ENCODE measurements at regions of chr11 and their contacts with region 1.

Region 1: GRCh38 chr11:1694064-1694845 is 2.7 kb upstream of the KRTAP5-6 start:
- DNase-seq: peak; percentile 55 to 87 (median 72)
- ATAC-seq: peak; percentile 91
- H3K4me3 ChIP-seq: peak overlapping the region; percentile 54
- H3K4me3 Mint-ChIP-seq: peak overlapping the region in 4 of 10 donors; percentile 6 to 82 (median 13)
- H3K27ac ChIP-seq: no peak overlapping the region
- H3K27ac Mint-ChIP-seq: peak overlapping the region in 2 of 9 donors; percentile 60
- H3K4me1 ChIP-seq: peaks cover 6 to 10% of the 10 kb centered on the region in 2 donors
- H3K4me1 Mint-ChIP-seq: peaks cover 0 to 13% (median 8%) of the 10 kb centered on the region in 7 donors
- H3K27me3 ChIP-seq: no peaks in the 10 kb centered on the region
- H3K27me3 Mint-ChIP-seq: peaks cover 8 to 29% (median 13%) of the 10 kb centered on the region in 5 donors

Region 2: DNA sequence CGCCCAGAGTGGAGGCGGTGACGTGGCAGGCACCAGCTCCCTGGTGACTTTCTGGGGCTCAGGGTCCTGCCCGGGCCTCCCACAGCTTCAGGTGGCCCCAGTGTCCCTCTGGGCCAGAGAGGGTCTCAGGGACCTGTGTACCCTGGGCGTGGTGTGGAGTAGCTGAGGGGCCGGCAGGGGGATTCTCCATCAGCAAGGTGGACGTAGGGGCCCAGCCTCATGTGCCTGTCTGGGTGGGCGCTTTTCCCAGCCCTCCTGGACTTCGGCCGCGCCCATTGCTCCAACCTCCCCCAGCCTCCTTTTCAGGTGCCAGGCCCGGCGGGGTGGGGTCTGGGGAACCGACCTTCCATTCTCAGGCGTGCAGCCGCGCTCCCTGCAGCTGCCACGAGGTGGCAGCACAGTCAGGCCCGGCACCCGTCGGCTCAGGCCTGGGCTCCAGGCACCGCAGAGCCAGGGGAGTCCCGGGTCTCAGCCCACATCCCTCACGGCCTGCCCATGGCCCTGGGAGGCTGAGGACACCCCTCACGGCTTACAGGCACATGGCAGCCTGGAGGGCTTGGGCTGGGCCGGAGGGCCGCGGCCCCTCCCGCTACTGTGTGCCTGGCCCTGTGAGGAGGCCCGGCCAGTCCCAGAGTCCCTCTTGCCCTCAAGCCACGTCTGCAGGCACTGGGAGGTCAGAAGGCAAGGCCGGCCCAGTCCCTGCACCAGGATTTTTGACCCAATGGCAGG is 491.3 kb before region 1 on chr11:
- CTCF ChIA-PET with region 1: no interaction called
- POLR2A ChIA-PET with region 1: no interaction called
- intact Hi-C with region 1: no loop called
- DNase-seq: peak in 8 of 9 donors; percentile 34 to 73 (median 60)
- ATAC-seq: peak; percentile 83
- H3K4me3 ChIP-seq: no peak overlapping the region
- H3K4me3 Mint-ChIP-seq: no peak overlapping the region
- H3K27ac ChIP-seq: no peak overlapping the region
- H3K27ac Mint-ChIP-seq: no peak overlapping the region
- H3K4me1 ChIP-seq: no peaks in the 10 kb centered on the region
- H3K4me1 Mint-ChIP-seq: no peaks in the 10 kb centered on the region
- H3K27me3 ChIP-seq: no peaks in the 10 kb centered on the region
- H3K27me3 Mint-ChIP-seq: no peaks in the 10 kb centered on the region

Region 3: DNA sequence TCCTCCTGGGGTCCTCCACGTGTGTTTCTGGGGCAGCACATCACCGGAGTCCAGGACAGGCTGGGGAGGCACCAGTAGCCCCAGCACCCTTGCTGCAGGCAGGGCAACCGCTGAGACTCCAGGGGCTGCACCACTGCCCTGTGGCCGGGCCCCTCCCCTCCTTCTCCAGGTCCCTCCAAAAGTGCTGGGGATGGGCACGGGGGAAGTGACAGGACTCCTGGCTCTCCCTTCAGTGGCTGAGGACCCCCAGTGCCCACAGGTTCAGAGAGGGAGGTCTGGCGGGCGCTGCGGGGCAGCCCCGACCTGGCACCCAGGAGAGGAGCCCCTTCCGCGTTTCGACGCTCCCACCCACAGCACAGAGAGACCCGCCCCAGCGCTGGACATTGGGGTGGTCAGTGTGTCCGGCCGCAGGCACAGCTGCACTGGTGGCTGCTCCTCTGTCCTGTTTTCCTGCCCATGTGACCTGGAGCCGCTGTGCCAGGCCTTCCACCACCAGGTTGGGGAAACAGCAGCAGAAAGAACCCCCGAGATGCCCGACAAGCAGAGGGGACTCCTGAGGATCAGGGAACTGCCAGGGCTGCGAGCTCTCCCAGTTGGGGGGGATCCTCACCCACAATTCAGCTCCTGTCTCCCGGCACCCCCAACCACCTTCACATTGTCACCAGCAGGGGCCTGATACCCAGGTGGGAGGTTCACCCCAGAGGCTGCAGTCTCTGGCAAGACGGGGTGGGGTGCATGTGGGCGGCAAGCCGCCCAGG is 51.1 kb before region 1 on chr11:
- CTCF ChIA-PET with region 1: no interaction called
- POLR2A ChIA-PET with region 1: no interaction called
- intact Hi-C with region 1: no loop called
- DNase-seq: no peak
- ATAC-seq: no peak
- H3K4me3 ChIP-seq: no peak overlapping the region
- H3K4me3 Mint-ChIP-seq: no peak overlapping the region
- H3K27ac ChIP-seq: no peak overlapping the region
- H3K27ac Mint-ChIP-seq: no peak overlapping the region
- H3K4me1 ChIP-seq: no peaks in the 10 kb centered on the region
- H3K4me1 Mint-ChIP-seq: peaks cover 0 to 10% (median 1%) of the 10 kb centered on the region in 7 donors
- H3K27me3 ChIP-seq: no peaks in the 10 kb centered on the region
- H3K27me3 Mint-ChIP-seq: peaks cover 0 to 19% (median 14%) of the 10 kb centered on the region in 5 donors

Region 4: GRCh38 chr11:1706634-1707400 is 12.6 kb after region 1 on chr11:
- CTCF ChIA-PET with region 1: interaction called, 15 read pairs
- POLR2A ChIA-PET with region 1: no interaction called
- intact Hi-C with region 1: no loop called
- DNase-seq: peak in 3 of 9 donors; percentile 11 to 29 (median 24)
- ATAC-seq: peak; percentile 57
- H3K4me3 ChIP-seq: no peak overlapping the region
- H3K4me3 Mint-ChIP-seq: no peak overlapping the region
- H3K27ac ChIP-seq: no peak overlapping the region
- H3K27ac Mint-ChIP-seq: no peak overlapping the region
- H3K4me1 ChIP-seq: no peaks in the 10 kb centered on the region
- H3K4me1 Mint-ChIP-seq: peaks cover 0 to 9% (median 4%) of the 10 kb centered on the region in 7 donors
- H3K27me3 ChIP-seq: no peaks in the 10 kb centered on the region
- H3K27me3 Mint-ChIP-seq: peaks cover 0 to 8% (median 0%) of the 10 kb centered on the region in 5 donors

Region 5: DNA sequence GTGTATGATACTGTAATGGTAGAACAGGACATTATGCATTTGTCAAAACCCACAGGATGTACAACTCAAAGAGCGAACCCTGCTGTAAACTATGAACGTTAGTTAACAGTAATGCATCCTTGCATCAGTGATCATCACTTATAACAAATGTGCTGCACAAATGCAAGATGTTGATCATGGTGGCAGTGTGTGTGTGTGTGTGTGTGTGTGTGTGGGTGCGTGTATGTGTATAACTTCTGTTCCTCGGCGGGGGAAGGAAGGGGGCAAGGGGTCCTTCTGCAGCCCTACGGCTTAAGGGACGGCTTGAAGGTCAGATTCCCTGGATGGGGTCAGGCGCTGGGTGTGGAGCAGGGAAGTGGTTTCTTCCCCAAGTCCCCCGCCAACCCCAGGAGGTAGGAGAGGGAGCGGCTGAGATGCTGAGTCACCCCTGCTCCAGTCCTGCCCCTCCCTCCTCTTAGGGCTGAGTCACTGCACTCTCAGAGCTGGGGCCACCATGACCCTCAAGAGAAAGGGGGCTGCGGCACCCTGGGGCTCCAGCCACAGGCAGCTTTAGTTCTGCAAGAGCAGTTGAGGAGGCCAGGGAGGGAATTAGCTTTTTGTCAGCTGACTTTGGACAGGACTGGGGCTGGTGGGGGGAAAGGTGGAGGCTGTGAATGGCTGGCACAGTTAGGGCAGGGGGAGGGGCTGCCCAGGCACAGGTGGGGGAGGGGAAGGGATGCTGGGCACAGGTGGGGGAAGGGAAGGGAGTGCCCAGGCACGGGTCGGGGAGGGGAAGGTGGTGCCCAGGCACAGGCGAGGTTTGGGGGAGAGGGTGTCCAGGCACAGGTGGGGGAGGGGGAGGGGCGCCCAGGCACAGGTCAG is 78.2 kb after region 1 on chr11:
- CTCF ChIA-PET with region 1: interaction called, 8 read pairs
- POLR2A ChIA-PET with region 1: no interaction called
- intact Hi-C with region 1: loop called in 1 of 2 experiments (anchors 1 kb)
- DNase-seq: peak in 4 of 9 donors; percentile 26 to 56 (median 39)
- ATAC-seq: peak; percentile 82
- H3K4me3 ChIP-seq: no peak overlapping the region
- H3K4me3 Mint-ChIP-seq: peak overlapping the region; percentile 10 to 74 (median 58)
- H3K27ac ChIP-seq: no peak overlapping the region
- H3K27ac Mint-ChIP-seq: peak overlapping the region in 7 of 9 donors; percentile 4 to 87 (median 62)
- H3K4me1 ChIP-seq: peaks cover 6 to 10% of the 10 kb centered on the region in 2 donors
- H3K4me1 Mint-ChIP-seq: peaks cover 9 to 34% (median 13%) of the 10 kb centered on the region in 7 donors
- H3K27me3 ChIP-seq: no peaks in the 10 kb centered on the region
- H3K27me3 Mint-ChIP-seq: peaks cover 0 to 17% (median 5%) of the 10 kb centered on the region in 5 donors

Region 6: DNA sequence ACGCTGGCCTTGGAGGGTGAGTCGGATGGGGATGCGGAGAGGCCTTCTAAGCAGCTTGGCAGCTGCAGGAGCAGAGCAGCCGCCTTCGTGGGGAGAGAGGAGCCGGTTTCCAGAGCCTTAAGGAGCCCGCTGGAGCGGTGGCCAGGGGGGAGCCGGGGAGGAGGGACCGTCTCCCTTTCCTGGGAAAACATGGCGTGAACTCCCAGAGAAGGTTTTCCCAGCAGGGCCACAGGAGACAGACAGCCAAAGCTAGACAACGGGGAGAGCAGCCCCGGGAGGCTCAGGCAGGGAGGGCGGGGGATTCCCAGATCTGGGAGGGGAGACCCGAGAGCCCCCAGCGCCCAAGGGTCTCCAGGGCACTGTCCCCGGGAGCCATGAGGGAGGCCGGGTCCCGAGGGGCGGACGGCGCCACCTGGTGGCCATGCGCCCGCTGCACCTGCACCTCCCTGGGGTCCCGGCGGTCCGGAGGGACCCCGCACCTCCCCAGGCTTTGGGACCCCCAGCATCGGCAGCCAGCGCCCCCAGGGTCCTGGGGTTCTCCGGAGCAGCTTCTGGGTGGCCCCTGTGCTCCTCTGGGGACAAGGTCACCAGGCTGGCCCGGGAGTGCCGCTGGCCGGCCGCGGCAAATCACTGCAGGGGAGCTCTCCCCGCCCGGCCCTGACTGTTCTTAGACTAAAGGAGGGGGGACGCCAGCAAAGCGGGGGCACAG is 138.1 kb after region 1 on chr11:
- CTCF ChIA-PET with region 1: interaction called, 229 read pairs
- POLR2A ChIA-PET with region 1: interaction called, 20 read pairs
- intact Hi-C with region 1: loop called in 1 of 2 experiments (anchors 1 kb)
- DNase-seq: peak; percentile 44 to 86 (median 62)
- ATAC-seq: peak; percentile 77
- H3K4me3 ChIP-seq: no peak overlapping the region
- H3K4me3 Mint-ChIP-seq: peak overlapping the region in 2 of 10 donors; percentile 20 to 42
- H3K27ac ChIP-seq: no peak overlapping the region
- H3K27ac Mint-ChIP-seq: peak overlapping the region in 1 of 9 donors; percentile 14
- H3K4me1 ChIP-seq: no peaks in the 10 kb centered on the region
- H3K4me1 Mint-ChIP-seq: peaks cover 0 to 1% (median 0%) of the 10 kb centered on the region in 7 donors
- H3K27me3 ChIP-seq: no peaks in the 10 kb centered on the region
- H3K27me3 Mint-ChIP-seq: peaks cover 0 to 11% (median 5%) of the 10 kb centered on the region in 5 donors

Region 7: GRCh38 chr11:2002807-2003206 is 308.6 kb after region 1 on chr11:
- CTCF ChIA-PET with region 1: interaction called, 58 read pairs
- POLR2A ChIA-PET with region 1: no interaction called
- intact Hi-C with region 1: no loop called
- DNase-seq: no peak
- ATAC-seq: peak; percentile 66
- H3K4me3 ChIP-seq: no peak overlapping the region
- H3K4me3 Mint-ChIP-seq: no peak overlapping the region
- H3K27ac ChIP-seq: no peak overlapping the region
- H3K27ac Mint-ChIP-seq: no peak overlapping the region
- H3K4me1 ChIP-seq: no peaks in the 10 kb centered on the region
- H3K4me1 Mint-ChIP-seq: no peaks in the 10 kb centered on the region
- H3K27me3 ChIP-seq: no peaks in the 10 kb centered on the region
- H3K27me3 Mint-ChIP-seq: no peaks in the 10 kb centered on the region

Measured in naive thymus-derived CD4-positive, alpha-beta T cell (primary cell).